Mammary epithelial cell (primary cell): ENCODE measurements at regions of chr1 and their contacts with region 1.

Region 1: GRCh38 chr1:3139871-3140361 is 70.9 kb downstream of the PRDM16 start:
- DNase-seq: no peak
- H3K4me3 ChIP-seq: no peak overlapping the region
- H3K27ac ChIP-seq: no peak overlapping the region
- H3K4me1 ChIP-seq: no peaks in the 10 kb centered on the region
- H3K27me3 ChIP-seq: no peaks in the 10 kb centered on the region
- CTCF ChIP-seq: no peak

Region 2: GRCh38 chr1:3247521-3248121 is 107.7 kb after region 1 on chr1:
- CTCF ChIA-PET with region 1: no interaction called
- dilution Hi-C with region 1: loop called (anchors 10 kb)
- in situ Hi-C with region 1: no loop called
- intact Hi-C with region 1: no loop called
- DNase-seq: peak; percentile 2
- H3K4me3 ChIP-seq: no peak overlapping the region
- H3K27ac ChIP-seq: no peak overlapping the region
- H3K4me1 ChIP-seq: no peaks in the 10 kb centered on the region
- H3K27me3 ChIP-seq: peaks cover 2% of the 10 kb centered on the region
- CTCF ChIP-seq: no peak

Region 3: DNA sequence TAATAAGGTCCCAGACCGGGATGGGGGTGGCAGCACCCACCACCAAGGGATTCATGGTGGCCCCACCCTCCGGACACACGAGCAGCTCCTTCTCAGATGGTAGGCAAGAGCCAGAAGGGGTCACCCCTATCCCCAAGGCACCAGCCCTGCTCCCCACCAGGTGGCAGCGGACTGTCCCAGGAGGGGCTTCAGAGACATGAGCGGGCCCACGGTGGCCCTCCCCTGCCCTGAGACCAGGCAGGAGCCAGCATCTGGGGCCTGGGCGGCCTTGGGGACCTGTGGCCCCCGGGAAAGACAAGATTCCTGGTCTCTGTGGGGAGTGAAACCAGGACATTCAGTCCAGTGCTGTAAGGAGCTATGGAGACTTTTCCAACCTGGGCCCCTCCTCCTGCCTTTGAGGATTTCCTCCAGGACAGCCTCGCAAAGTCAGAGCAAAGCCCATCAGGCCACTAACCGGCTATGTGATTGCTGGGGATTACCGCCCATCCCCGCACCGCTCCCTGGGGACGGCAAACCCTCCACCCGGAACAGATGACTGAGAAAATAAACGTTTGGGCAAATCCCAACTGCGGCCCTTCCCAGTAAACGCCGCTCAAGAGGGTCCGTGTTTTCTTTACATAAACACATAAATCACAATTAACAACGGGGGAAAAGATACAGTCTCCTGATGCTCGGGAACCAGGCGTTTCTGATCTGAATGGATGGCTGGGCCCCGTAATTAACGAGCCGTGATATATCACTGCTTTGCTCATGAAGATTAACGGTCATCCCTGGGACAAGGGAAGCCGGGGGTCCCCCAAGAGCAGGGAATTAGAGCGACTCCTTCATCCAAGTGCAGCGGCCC is 263.7 kb after region 1 on chr1:
- CTCF ChIA-PET with region 1: no interaction called
- dilution Hi-C with region 1: loop called (anchors 10 kb)
- in situ Hi-C with region 1: no loop called
- intact Hi-C with region 1: no loop called
- DNase-seq: no peak
- H3K4me3 ChIP-seq: no peak overlapping the region
- H3K27ac ChIP-seq: no peak overlapping the region
- H3K4me1 ChIP-seq: peaks cover 2% of the 10 kb centered on the region
- H3K27me3 ChIP-seq: no peaks in the 10 kb centered on the region
- CTCF ChIP-seq: no peak